Mucosa of descending colon (tissue), 3 donors: ENCODE measurements at regions of chr1 and their contacts with region 1.

Region 1: GRCh38 chr1:206590025-206590758 is 22.1 kb downstream of the EIF2D start:
- DNase-seq: no peak
- ATAC-seq: peak; percentile 56
- H3K4me3 ChIP-seq: no peak overlapping the region
- H3K4me1 ChIP-seq: peaks cover 4% of the 10 kb centered on the region
- CTCF ChIP-seq: no peak

Region 2: DNA sequence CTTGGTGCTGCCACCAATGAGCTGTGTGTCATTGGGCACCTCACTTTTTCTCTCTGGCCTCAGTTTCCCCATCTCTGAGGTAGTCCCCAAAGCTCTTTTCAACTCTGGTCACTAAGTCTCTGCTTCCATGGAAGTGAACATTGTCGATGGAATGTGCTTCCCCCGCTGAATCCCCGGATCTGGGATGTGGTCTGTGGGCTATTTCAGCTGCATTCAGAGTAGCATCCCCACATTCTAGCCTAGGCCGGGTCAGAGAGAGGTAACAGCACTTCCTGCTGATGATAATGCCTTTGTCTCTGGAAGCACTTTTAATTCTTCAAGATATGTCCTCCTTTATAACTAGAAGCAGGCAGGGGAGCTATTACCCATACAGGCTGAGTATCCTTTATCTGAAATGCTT is 53.1 kb before region 1 on chr1:
- intact Hi-C with region 1: loop called in 1 of 2 experiments (anchors 10 kb)
- DNase-seq: no peak
- ATAC-seq: no peak
- H3K4me3 ChIP-seq: no peak overlapping the region
- H3K4me1 ChIP-seq: peaks cover 6% of the 10 kb centered on the region
- CTCF ChIP-seq: no peak

Region 3: DNA sequence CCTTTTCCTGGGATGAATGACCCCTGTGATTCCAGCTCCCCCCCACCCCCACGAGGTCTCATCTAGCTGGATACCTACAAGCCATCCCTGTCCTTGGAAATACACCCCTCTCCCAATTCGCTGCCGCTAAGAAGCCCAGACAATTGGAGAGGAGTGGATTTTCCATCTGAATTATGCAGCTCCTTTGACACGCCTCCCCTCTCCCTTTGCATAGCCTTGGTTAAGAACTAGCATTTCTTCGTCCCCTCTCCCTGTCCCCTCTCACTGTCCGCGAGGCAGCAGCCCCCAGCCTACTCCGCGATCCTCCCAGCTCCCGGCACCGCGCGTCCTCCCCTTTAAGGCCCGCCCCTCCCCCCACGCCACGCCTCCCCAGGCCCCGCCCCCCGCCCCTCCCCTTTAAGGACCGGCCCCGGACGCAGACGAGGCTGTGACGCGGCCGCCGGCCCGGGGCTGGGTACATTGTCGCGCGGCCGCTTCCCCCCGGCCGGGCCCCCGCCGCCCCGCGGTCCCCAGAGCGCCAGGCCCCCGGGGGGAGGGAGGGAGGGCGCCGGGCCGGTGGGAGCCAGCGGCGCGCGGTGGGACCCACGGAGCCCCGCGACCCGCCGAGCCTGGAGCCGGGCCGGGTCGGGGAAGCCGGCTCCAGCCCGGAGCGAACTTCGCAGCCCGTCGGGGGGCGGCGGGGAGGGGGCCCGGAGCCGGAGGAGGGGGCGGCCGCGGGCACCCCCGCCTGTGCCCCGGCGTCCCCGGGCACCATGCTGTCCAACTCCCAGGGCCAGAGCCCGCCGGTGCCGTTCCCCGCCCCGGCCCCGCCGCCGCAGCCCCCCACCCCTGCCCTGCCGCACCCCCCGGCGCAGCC is 94.5 kb after region 1 on chr1 and contains the start of gene MAPKAPK2:
- intact Hi-C with region 1: no loop called
- DNase-seq: peak; percentile 79 to 86 (median 85)
- ATAC-seq: peak; percentile 85
- H3K4me3 ChIP-seq: peak within 1 kb of the TSS; percentile 78
- H3K4me1 ChIP-seq: peaks cover 34% of the 10 kb centered on the region
- CTCF ChIP-seq: no peak
- total RNA-seq, gene MAPKAPK2: 68.4 to 75.2 (median 72.1) TPM